K562 (cell line): ENCODE measurements at regions of chr11 and their contacts with region 1.

Region 1: GRCh38 chr11:86456052-86456939 is 81.6 kb downstream of the CCDC81 start:
- DNase-seq: peak; percentile 77 to 86 (median 84)
- ATAC-seq: peak; percentile 98
- H3K4me3 ChIP-seq: no peak overlapping the region
- H3K27ac ChIP-seq: no peak overlapping the region
- H3K4me1 ChIP-seq: no peaks in the 10 kb centered on the region
- H3K27me3 ChIP-seq: no peaks in the 10 kb centered on the region
- CTCF ChIP-seq: peak; percentile 83 to 93 (median 92)
- EP300 ChIP-seq: no peak
- POLR2A ChIP-seq: no peak
- RAD21 ChIP-seq: peak; percentile 97 to 98

Region 2: GRCh38 chr11:86571273-86571948 is 115.1 kb after region 1 on chr11:
- CTCF ChIA-PET with region 1: interaction called, 18 read pairs
- POLR2A ChIA-PET with region 1: interaction called, 3 read pairs
- in situ Hi-C with region 1: loop called (anchors 5 kb)
- intact Hi-C with region 1: loop called (anchors 1 kb)
- DNase-seq: peak; percentile 63 to 74 (median 69)
- ATAC-seq: peak; percentile 99
- H3K4me3 ChIP-seq: no peak overlapping the region
- H3K27ac ChIP-seq: no peak overlapping the region
- H3K4me1 ChIP-seq: no peaks in the 10 kb centered on the region
- H3K27me3 ChIP-seq: peaks cover 11 to 37% of the 10 kb centered on the region in 2 experiments; a peak in 4 of 5 replicates
- CTCF ChIP-seq: peak; percentile 81 to 98 (median 85)
- EP300 ChIP-seq: no peak
- POLR2A ChIP-seq: no peak
- RAD21 ChIP-seq: peak; percentile 59 to 87

Region 3: GRCh38 chr11:86676548-86677154 is 220.4 kb after region 1 on chr11:
- CTCF ChIA-PET with region 1: no interaction called
- POLR2A ChIA-PET with region 1: no interaction called
- in situ Hi-C with region 1: no loop called
- intact Hi-C with region 1: loop called (anchors 2 kb)
- DNase-seq: peak; percentile 55 to 64 (median 60)
- ATAC-seq: peak; percentile 89
- H3K4me3 ChIP-seq: no peak overlapping the region
- H3K27ac ChIP-seq: no peak overlapping the region
- H3K4me1 ChIP-seq: peaks cover 0 to 8% of the 10 kb centered on the region in 2 experiments; a peak in 1 of 5 replicates
- H3K27me3 ChIP-seq: peaks cover 11 to 27% of the 10 kb centered on the region in 2 experiments; a peak in 4 of 5 replicates
- CTCF ChIP-seq: peak; percentile 65 to 79 (median 73)
- EP300 ChIP-seq: no peak
- POLR2A ChIP-seq: no peak
- RAD21 ChIP-seq: peak; percentile 77 to 80

Region 4: GRCh38 chr11:86818466-86819192 is 362.3 kb after region 1 on chr11:
- CTCF ChIA-PET with region 1: interaction called, 14 read pairs
- POLR2A ChIA-PET with region 1: no interaction called
- in situ Hi-C with region 1: loop called (anchors 5 kb)
- intact Hi-C with region 1: loop called (anchors 1 kb)
- DNase-seq: peak; percentile 49 to 64 (median 55)
- ATAC-seq: peak; percentile 77
- H3K4me3 ChIP-seq: no peak overlapping the region
- H3K27ac ChIP-seq: no peak overlapping the region
- H3K4me1 ChIP-seq: no peaks in the 10 kb centered on the region
- H3K27me3 ChIP-seq: peaks cover 0 to 14% of the 10 kb centered on the region in 2 experiments; a peak in 2 of 5 replicates
- CTCF ChIP-seq: peak; percentile 61 to 88 (median 67)
- EP300 ChIP-seq: no peak
- POLR2A ChIP-seq: no peak
- RAD21 ChIP-seq: peak; percentile 93 to 95

Region 5: DNA sequence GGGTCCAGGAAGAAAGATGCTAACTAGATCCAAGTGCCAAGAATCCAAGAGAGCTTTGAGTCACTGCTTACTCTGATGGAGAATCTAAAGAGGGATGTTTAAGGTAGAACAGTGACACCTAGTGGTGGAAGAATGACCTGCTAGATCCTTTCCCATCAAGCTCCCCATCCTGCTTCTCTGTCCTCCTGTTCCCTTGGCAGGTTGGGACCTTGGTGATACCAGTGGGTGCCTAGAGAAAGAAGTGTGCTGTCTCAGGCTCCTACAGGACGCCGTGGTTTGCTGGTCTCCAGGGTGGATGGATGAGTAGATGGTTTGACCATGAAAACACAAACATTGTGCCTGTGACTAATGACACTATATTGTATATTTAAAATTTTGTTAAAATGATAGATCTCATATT is 965.1 kb after region 1 on chr11:
- CTCF ChIA-PET with region 1: no interaction called
- POLR2A ChIA-PET with region 1: no interaction called
- in situ Hi-C with region 1: loop called (anchors 10 kb)
- intact Hi-C with region 1: no loop called
- DNase-seq: peak; percentile 70 to 82 (median 77)
- ATAC-seq: peak; percentile 97
- H3K4me3 ChIP-seq: no peak overlapping the region
- H3K27ac ChIP-seq: no peak overlapping the region
- H3K4me1 ChIP-seq: no peaks in the 10 kb centered on the region
- H3K27me3 ChIP-seq: no peaks in the 10 kb centered on the region
- CTCF ChIP-seq: peak; percentile 62 to 78 (median 66)
- EP300 ChIP-seq: no peak
- POLR2A ChIP-seq: no peak
- RAD21 ChIP-seq: peak; percentile 64 to 85